GM12878 (cell line): ENCODE measurements at regions of chr20 and their contacts with region 1.

Region 1: DNA sequence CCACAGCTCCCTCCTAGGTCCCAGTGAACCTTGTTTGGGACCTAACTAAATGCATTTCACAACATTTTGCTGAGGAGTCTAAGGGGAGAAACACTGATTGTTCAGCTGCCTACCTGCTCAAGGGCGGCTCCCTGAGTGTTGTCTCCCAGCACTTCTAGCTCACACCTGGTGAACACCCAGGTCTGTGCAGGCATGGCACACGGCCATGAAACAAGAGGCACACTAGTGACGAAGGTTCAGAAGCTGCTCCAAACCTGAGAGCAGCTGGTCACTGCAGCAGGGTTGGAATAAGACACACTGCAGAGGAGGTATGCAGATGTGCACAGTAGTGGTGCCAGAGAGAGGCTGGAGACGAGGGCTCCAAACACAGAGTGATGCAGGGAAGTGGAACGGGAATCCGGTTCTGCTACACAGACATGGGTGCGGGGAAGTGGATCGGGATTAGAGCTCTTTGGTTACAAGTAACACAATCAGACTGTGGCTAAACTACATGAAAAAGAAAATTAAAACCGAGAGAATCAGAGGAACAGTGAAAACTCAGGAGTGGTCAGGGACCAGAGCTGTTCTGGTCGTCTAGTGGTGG is 486.1 kb upstream of the CDH4 start:
- DNase-seq: no peak
- ATAC-seq: no peak
- H3K4me3 ChIP-seq: no peak overlapping the region
- H3K27ac ChIP-seq: no peak overlapping the region
- H3K4me1 ChIP-seq: no peaks in the 10 kb centered on the region
- H3K27me3 ChIP-seq: no peaks in the 10 kb centered on the region
- CTCF ChIP-seq: no peak
- EP300 ChIP-seq: no peak
- POLR2A ChIP-seq: no peak
- RAD21 ChIP-seq: no peak

Region 2: DNA sequence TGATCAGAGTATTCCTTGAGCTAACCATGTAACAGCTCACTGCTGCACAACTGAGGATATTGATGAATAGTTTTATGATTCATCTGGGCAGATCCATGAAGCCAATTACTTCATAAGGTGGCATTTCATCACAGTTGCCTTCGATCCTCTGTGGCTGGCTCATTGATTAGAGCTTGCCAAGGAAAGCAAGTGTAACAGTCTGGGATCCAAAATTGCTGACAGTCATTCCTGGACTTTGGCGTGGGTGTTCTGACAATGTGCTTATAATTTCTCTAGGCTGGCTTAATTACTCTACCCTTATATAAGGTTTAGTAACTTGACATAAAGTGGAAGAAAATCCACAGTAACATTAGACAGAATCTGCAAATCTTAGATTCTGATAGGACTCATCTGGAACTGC is 65.2 kb before region 1 on chr20:
- CTCF ChIA-PET with region 1: no interaction called
- POLR2A ChIA-PET with region 1: no interaction called
- RAD21 ChIA-PET with region 1: no interaction called
- SMC1A ChIA-PET with region 1: no interaction called
- in situ Hi-C with region 1: loop called (anchors 10 kb)
- intact Hi-C with region 1: no loop called
- DNase-seq: no peak
- ATAC-seq: no peak
- H3K4me3 ChIP-seq: no peak overlapping the region
- H3K27ac ChIP-seq: no peak overlapping the region
- H3K4me1 ChIP-seq: no peaks in the 10 kb centered on the region
- H3K27me3 ChIP-seq: no peaks in the 10 kb centered on the region
- CTCF ChIP-seq: no peak
- EP300 ChIP-seq: no peak
- POLR2A ChIP-seq: no peak
- RAD21 ChIP-seq: no peak

Region 3: DNA sequence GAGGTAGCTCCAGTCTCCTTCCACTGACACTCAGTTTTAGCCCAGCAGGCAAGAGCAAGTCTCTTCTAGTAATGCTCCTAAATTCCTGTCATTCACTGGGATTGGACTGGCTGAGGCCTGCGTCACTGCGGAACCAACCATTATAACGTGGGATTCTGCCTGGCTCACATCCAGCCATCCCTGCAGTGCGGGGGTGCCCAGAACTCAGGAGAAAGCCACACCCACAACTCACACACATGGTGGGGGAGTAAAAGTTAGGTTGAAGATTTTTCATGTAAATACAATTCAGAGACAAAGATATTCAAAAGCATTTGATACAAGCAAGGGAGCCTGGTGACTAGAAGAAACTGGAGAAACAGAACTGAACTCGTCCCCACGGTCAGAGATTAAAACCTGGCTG is 17.8 kb before region 1 on chr20:
- CTCF ChIA-PET with region 1: no interaction called
- POLR2A ChIA-PET with region 1: no interaction called
- RAD21 ChIA-PET with region 1: no interaction called
- SMC1A ChIA-PET with region 1: no interaction called
- in situ Hi-C with region 1: no loop called
- intact Hi-C with region 1: no loop called
- DNase-seq: no peak
- ATAC-seq: no peak
- H3K4me3 ChIP-seq: no peak overlapping the region
- H3K27ac ChIP-seq: no peak overlapping the region
- H3K4me1 ChIP-seq: no peaks in the 10 kb centered on the region
- H3K27me3 ChIP-seq: no peaks in the 10 kb centered on the region
- CTCF ChIP-seq: no peak
- EP300 ChIP-seq: no peak
- POLR2A ChIP-seq: no peak
- RAD21 ChIP-seq: no peak

Region 4: GRCh38 chr20:60877071-60877857 is 111.4 kb after region 1 on chr20:
- CTCF ChIA-PET with region 1: no interaction called
- POLR2A ChIA-PET with region 1: no interaction called
- RAD21 ChIA-PET with region 1: no interaction called
- SMC1A ChIA-PET with region 1: no interaction called
- in situ Hi-C with region 1: no loop called
- intact Hi-C with region 1: no loop called
- DNase-seq: no peak
- ATAC-seq: no peak
- H3K4me3 ChIP-seq: no peak overlapping the region
- H3K27ac ChIP-seq: no peak overlapping the region
- H3K4me1 ChIP-seq: no peaks in the 10 kb centered on the region
- H3K27me3 ChIP-seq: no peaks in the 10 kb centered on the region
- CTCF ChIP-seq: no peak
- EP300 ChIP-seq: no peak
- POLR2A ChIP-seq: no peak
- RAD21 ChIP-seq: no peak